Common myeloid progenitor, CD34-positive (primary cell): ENCODE measurements at regions of chr11 and their contacts with region 1.

Region 1: GRCh38 chr11:33065445-33066178 is 26.2 kb downstream of the TCP11L1 start:
- DNase-seq: peak; percentile 65 to 86 (median 83)
- H3K4me3 ChIP-seq: no peak overlapping the region
- H3K27ac ChIP-seq: peak overlapping the region in 1 of 2 experiments; percentile 3
- H3K4me1 ChIP-seq: peaks cover 5 to 30% (median 28%) of the 10 kb centered on the region in 4 experiments
- H3K27me3 ChIP-seq: no peaks in the 10 kb centered on the region

Region 2: GRCh38 chr11:32809313-32809712 is 256.3 kb before region 1 on chr11:
- CTCF ChIA-PET with region 1: interaction called, 10 read pairs
- POLR2A ChIA-PET with region 1: no interaction called
- DNase-seq: peak; percentile 65 to 84 (median 77)
- H3K4me3 ChIP-seq: no peak overlapping the region
- H3K27ac ChIP-seq: no peak overlapping the region
- H3K4me1 ChIP-seq: no peaks in the 10 kb centered on the region
- H3K27me3 ChIP-seq: no peaks in the 10 kb centered on the region

Region 3: DNA sequence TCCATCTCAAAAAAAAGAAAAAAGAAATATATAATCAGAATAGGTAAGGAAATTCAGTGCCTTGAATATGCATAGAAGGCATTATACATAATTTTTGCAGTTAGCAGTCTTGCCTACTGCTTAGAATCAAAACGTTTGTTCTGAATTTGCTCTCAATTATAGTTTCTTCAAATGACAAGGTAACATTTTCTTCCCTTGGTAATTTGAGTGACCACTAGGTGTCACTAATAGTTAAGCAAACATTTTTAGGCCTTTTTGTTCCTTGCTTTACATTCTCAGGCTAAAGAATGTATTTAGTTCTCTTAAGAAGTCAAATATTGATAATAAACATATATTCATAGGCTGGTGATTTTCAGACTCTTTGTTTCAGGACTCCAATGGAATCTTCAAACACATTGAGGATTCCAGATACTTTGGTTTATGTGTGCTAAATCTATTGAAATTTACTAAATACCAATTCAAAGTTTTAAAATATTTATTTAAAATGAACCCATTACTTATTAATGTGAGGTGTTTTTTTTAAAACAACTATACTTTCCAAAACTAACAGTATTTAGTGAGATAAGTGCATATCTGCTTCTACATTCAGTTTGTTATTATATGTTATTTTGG is 105.0 kb before region 1 on chr11:
- CTCF ChIA-PET with region 1: interaction called, 145 read pairs
- POLR2A ChIA-PET with region 1: no interaction called
- DNase-seq: peak; percentile 60 to 83 (median 76)
- H3K4me3 ChIP-seq: no peak overlapping the region
- H3K27ac ChIP-seq: no peak overlapping the region
- H3K4me1 ChIP-seq: no peaks in the 10 kb centered on the region
- H3K27me3 ChIP-seq: no peaks in the 10 kb centered on the region

Region 4: DNA sequence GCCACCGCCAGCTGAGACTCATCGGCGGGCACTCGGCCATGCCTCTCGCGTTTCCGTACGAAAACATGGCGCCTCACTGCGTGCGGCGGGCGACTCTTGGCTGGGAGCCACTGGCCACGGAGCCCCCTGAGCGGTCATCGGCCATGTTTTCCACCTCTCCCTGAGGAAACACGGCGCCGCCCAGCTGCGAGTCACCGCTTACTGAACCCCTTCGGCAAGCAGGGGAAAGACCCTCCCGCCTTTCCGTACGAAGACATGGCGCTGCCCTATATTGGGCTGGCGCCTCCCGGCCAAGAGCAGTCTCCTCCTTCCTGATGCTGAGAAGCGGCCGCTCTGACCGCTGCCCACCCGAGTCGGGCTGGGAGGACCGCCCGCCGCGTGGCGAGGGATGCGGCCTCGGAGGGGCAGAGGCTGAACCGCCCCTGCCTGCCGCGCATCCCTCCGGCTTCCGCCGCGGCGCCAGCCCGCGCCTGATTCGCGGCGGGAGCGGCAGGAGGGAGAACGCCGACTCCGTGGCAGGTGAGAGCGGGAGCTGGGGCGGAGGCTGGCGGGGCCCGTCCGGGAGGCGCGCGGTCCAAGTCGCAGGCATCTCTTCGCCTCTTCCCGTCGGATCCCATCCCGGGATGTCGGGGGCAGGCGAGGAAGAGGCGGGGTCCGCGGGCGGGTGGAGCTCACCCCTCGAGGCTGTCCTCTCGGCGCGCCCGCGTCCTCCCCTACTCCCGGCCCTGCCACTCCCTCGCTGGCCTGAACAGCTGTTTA is 26.2 kb before region 1 on chr11 and contains the start of gene TCP11L1:
- CTCF ChIA-PET with region 1: interaction called, 11 read pairs
- POLR2A ChIA-PET with region 1: no interaction called
- DNase-seq: peak; percentile 89 to 92 (median 91)
- H3K4me3 ChIP-seq: peak within 1 kb of the TSS; percentile 90 to 98 (median 95)
- H3K27ac ChIP-seq: peak within 1 kb of the TSS; percentile 77 to 85
- H3K4me1 ChIP-seq: peaks cover 0 to 24% (median 16%) of the 10 kb centered on the region in 4 experiments
- H3K27me3 ChIP-seq: no peaks in the 10 kb centered on the region

Region 5: DNA sequence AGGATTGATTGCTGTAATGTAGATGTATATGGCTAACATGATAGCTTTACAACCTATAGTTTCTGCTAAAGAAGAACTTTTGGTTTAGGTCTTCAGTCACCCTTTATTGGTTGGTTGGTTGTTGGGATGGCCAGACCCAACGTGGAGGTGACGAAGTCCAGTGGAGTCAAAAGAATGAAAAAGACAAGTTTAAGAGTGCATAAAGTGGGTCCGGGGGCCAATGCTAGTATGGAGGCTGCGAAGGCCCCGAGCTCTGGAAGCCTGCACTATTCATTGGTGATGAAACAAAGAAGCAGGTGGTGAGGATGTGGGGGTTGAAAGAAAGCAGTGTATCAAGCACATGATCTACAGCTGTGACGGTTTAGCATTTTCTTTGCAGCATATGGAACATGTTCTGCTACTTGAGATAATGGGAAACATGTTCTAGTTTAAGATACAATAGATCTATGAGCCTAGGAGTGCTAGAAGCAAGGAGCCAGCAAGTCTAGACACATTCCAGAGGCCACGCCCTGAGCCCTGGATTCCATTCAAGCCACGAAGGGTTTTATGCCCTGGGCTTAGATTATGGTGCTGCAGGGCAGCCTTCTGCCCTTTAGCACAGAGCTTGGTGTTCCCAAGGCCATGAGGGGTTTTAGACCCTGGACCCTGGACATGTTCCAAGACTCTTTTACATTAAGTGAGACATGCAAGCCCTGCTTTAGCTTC is 19.9 kb before region 1 on chr11:
- CTCF ChIA-PET with region 1: interaction called, 10 read pairs
- POLR2A ChIA-PET with region 1: no interaction called
- DNase-seq: no peak
- H3K4me3 ChIP-seq: no peak overlapping the region
- H3K27ac ChIP-seq: no peak overlapping the region
- H3K4me1 ChIP-seq: peaks cover 0 to 9% (median 4%) of the 10 kb centered on the region in 4 experiments
- H3K27me3 ChIP-seq: no peaks in the 10 kb centered on the region

Region 6: GRCh38 chr11:33052231-33052630 is 13.4 kb before region 1 on chr11:
- CTCF ChIA-PET with region 1: interaction called, 36 read pairs
- POLR2A ChIA-PET with region 1: no interaction called
- DNase-seq: peak; percentile 10 to 16 (median 14)
- H3K4me3 ChIP-seq: peak overlapping the region in 1 of 7 experiments; percentile 55
- H3K27ac ChIP-seq: no peak overlapping the region
- H3K4me1 ChIP-seq: peaks cover 0 to 13% (median 3%) of the 10 kb centered on the region in 4 experiments
- H3K27me3 ChIP-seq: no peaks in the 10 kb centered on the region

Region 7: GRCh38 chr11:33083918-33084317 is 18.3 kb after region 1 on chr11:
- CTCF ChIA-PET with region 1: interaction called, 11 read pairs
- POLR2A ChIA-PET with region 1: no interaction called
- DNase-seq: no peak
- H3K4me3 ChIP-seq: no peak overlapping the region
- H3K27ac ChIP-seq: no peak overlapping the region
- H3K4me1 ChIP-seq: no peaks in the 10 kb centered on the region
- H3K27me3 ChIP-seq: no peaks in the 10 kb centered on the region